CD8-positive, alpha-beta T cell (primary cell): ENCODE measurements at regions of chr2 and their contacts with region 1.

Region 1: GRCh38 chr2:7083577-7084509 is 166.6 kb downstream of the RNF144A start:
- DNase-seq: peak in 2 of 9 experiments; percentile 23 to 31
- ATAC-seq: no peak
- H3K4me3 ChIP-seq: no peak overlapping the region
- H3K4me3 Mint-ChIP-seq: no peak overlapping the region
- H3K27ac ChIP-seq: no peak overlapping the region
- H3K27ac Mint-ChIP-seq: no peak overlapping the region
- H3K4me1 ChIP-seq: no peaks in the 10 kb centered on the region
- H3K4me1 Mint-ChIP-seq: no peaks in the 10 kb centered on the region
- H3K27me3 ChIP-seq: no peaks in the 10 kb centered on the region
- H3K27me3 Mint-ChIP-seq: no peaks in the 10 kb centered on the region
- CTCF ChIP-seq: peak; percentile 33

Region 2: DNA sequence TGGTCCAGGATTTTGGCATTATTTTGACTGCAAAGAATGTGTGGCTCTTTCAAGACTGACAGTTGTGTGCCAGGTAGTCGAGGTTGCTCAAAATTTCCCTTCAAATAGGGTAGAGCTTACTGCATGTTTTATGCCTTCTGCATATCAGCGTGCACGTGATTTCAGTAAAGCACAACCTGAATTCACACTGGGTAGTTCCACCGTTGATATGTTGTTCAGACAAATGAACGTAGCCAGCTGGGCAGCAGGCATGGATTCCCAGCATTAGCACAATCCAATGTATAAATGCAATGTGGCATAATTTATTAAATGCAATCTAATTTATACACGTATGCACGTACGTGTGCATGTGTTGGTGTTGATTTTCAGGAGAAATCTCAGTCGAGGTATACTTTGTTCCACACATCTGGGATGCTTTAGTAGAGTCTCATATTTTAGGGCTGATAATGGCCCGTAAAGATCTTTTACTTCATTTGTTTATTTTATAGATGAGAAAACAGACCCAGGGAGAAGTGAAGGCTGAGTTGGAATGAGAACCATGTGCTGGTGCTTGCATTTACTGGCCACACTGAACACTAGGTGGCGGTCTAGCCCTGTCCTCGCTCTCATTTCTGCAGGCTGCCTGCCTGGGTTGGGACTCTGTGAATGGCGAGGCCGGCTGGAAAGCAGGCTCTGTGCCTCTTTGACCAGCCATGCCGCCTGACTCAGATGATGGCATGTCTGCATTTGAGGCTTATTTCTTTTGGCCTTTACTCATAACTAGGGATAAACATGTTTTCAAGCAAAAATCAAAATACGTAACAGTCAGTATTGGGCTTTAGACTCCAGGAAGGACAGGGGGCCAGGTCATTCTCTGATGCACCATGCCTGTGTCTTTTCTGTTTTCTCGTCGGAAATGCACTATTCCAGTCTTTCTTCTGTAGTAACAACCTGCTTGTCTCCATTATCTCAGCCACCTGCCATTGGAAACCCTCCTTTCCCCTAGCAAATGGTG is 46.2 kb before region 1 on chr2:
- CTCF ChIA-PET with region 1: no interaction called
- POLR2A ChIA-PET with region 1: no interaction called
- intact Hi-C with region 1: loop called (anchors 2 kb)
- DNase-seq: peak; percentile 29 to 71 (median 56)
- ATAC-seq: peak; percentile 75
- H3K4me3 ChIP-seq: no peak overlapping the region
- H3K4me3 Mint-ChIP-seq: no peak overlapping the region
- H3K27ac ChIP-seq: no peak overlapping the region
- H3K27ac Mint-ChIP-seq: no peak overlapping the region
- H3K4me1 ChIP-seq: no peaks in the 10 kb centered on the region
- H3K4me1 Mint-ChIP-seq: peaks cover 3% of the 10 kb centered on the region
- H3K27me3 ChIP-seq: no peaks in the 10 kb centered on the region
- H3K27me3 Mint-ChIP-seq: no peaks in the 10 kb centered on the region
- CTCF ChIP-seq: peak; percentile 74